ENCODE measurements at regions of chr6 and their contacts with region 1.

Region 1: GRCh38 chr6:156912431-156912830 is 135.3 kb downstream of the ARID1B start:
- DNase-seq: no peak
- H3K4me3 ChIP-seq: no peak overlapping the region
- H3K27ac ChIP-seq: no peak overlapping the region
- H3K27me3 ChIP-seq: no peaks in the 10 kb centered on the region
- CTCF ChIP-seq: no peak

Region 2: DNA sequence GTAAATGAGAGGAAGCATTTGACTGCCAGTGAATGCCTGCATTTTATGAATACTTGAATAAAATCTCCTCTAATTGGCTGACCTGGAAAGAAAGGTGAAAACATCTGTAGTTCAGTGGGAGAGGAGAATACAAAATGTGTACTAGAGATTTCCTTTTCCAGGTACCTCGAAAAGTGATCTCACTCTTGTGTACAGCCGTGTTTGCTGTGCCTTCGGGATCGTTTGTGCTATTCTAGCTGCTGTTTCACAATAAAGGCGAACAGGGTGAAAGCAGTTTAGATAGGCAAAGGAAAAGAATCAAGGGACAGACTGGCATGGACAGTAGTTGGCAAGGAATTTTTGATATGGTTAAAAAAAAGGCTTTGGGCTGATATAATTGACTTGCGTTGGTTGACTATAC is 23.0 kb before region 1 on chr6:
- CTCF ChIA-PET with region 1: interaction called, 15 read pairs
- POLR2A ChIA-PET with region 1: no interaction called
- DNase-seq: no peak
- H3K4me3 ChIP-seq: no peak overlapping the region
- H3K27ac ChIP-seq: no peak overlapping the region
- H3K27me3 ChIP-seq: no peaks in the 10 kb centered on the region
- CTCF ChIP-seq: no peak

Region 3: GRCh38 chr6:156946370-156946936 is 34.0 kb after region 1 on chr6:
- CTCF ChIA-PET with region 1: no interaction called
- POLR2A ChIA-PET with region 1: no interaction called
- DNase-seq: no peak
- H3K4me3 ChIP-seq: no peak overlapping the region
- H3K27ac ChIP-seq: no peak overlapping the region
- H3K27me3 ChIP-seq: no peaks in the 10 kb centered on the region
- CTCF ChIP-seq: no peak